ENCODE measurements at regions of chr3 and their contacts with region 1.

Region 1: GRCh38 chr3:134212906-134213665 is 37.6 kb downstream of the RYK start:
- DNase-seq: peak; percentile 53
- H3K4me3 ChIP-seq: no peak overlapping the region
- CTCF ChIP-seq: peak; percentile 99

Region 2: DNA sequence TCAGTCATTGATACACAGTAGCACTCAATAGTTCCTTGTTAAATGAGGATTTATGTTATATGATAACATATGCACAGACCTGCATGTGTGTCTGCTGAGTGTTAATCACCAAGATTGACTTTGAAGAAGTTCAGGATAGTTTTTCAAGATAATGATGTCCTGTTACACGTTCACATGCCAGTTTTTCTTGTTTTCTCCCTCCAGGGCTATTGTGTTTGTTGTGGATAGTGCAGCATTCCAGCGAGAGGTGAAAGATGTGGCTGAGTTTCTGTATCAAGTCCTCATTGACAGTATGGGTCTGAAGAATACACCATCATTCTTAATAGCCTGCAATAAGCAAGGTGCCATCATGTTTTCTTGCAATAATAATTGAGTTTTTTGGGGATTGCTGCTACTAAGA is 397.7 kb before region 1 on chr3:
- in situ Hi-C with region 1: loop called (anchors 5 kb)
- DNase-seq: no peak
- H3K4me3 ChIP-seq: no peak overlapping the region
- CTCF ChIP-seq: no peak

Region 3: GRCh38 chr3:134260984-134261383 is 47.9 kb after region 1 on chr3:
- in situ Hi-C with region 1: no loop called
- DNase-seq: no peak
- H3K4me3 ChIP-seq: no peak overlapping the region
- CTCF ChIP-seq: no peak